Heart right ventricle (tissue), 16 donors: ENCODE measurements at regions of chr15 and their contacts with region 1.

Region 1: DNA sequence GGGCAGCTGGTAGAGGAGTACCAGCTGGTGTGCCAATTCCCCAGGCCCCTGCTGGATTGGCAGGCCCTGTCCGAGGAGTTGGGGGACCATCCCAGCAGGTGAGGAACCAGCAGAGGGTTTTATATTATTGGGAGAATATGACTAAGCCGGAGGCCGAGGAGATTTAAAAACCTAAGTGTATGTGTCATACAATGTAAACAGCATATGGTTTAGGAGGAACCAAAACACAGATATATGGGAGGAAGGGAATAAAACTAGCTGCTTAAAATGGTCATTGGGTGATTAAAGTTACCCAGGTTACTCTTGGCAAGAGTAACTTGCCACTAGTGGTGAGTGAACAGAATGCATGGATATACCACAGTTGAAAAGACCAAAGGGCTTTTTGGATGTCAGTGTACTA is 22.1 kb downstream of the SNRPN start:
- DNase-seq: no peak
- ATAC-seq: no peak
- H3K4me3 ChIP-seq: no peak overlapping the region
- H3K27ac ChIP-seq: no peak overlapping the region
- H3K4me1 ChIP-seq: no peaks in the 10 kb centered on the region
- H3K27me3 ChIP-seq: no peaks in the 10 kb centered on the region
- CTCF ChIP-seq: peak in 1 of 9 donors; percentile 18

Region 2: DNA sequence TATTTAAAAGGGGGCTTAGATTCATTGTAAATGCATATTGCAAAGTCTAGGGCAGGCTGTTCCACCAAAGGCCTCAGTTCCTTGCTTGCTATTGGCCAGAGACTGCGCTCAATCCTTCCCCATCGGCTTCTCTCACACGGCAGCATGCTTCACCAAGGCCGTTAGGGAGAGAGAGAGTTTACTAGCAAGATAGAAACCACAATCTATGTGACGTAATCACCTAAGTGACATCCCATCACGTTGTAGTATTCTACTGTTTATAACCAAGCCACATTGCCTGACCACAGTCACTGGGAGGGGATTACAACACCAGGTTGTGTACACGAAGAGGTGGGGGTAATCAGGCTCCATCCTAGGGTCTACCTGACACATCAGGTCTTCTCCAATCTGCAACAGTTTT is 317.3 kb before region 1 on chr15:
- intact Hi-C with region 1: no loop called
- DNase-seq: no peak
- ATAC-seq: no peak
- H3K4me3 ChIP-seq: no peak overlapping the region
- H3K27ac ChIP-seq: no peak overlapping the region
- H3K4me1 ChIP-seq: no peaks in the 10 kb centered on the region
- H3K27me3 ChIP-seq: no peaks in the 10 kb centered on the region
- CTCF ChIP-seq: no peak

Region 3: GRCh38 chr15:24916305-24917009 is 60.5 kb before region 1 on chr15:
- intact Hi-C with region 1: loop called in 1 of 10 experiments (anchors 10 kb)
- DNase-seq: no peak
- ATAC-seq: no peak
- H3K4me3 ChIP-seq: no peak overlapping the region
- H3K27ac ChIP-seq: no peak overlapping the region
- H3K4me1 ChIP-seq: no peaks in the 10 kb centered on the region
- H3K27me3 ChIP-seq: no peaks in the 10 kb centered on the region
- CTCF ChIP-seq: no peak

Region 4: GRCh38 chr15:25092661-25093060 is 115.7 kb after region 1 on chr15:
- intact Hi-C with region 1: loop called in 1 of 10 experiments (anchors 10 kb)
- DNase-seq: no peak
- ATAC-seq: no peak
- H3K4me3 ChIP-seq: no peak overlapping the region
- H3K27ac ChIP-seq: peak overlapping the region in 3 of 10 donors; percentile 23 to 37 (median 25)
- H3K4me1 ChIP-seq: peaks cover 0 to 6% (median 0%) of the 10 kb centered on the region in 9 donors
- H3K27me3 ChIP-seq: no peaks in the 10 kb centered on the region
- CTCF ChIP-seq: no peak